ENCODE measurements at regions of chr5 and their contacts with region 1.

Region 1: DNA sequence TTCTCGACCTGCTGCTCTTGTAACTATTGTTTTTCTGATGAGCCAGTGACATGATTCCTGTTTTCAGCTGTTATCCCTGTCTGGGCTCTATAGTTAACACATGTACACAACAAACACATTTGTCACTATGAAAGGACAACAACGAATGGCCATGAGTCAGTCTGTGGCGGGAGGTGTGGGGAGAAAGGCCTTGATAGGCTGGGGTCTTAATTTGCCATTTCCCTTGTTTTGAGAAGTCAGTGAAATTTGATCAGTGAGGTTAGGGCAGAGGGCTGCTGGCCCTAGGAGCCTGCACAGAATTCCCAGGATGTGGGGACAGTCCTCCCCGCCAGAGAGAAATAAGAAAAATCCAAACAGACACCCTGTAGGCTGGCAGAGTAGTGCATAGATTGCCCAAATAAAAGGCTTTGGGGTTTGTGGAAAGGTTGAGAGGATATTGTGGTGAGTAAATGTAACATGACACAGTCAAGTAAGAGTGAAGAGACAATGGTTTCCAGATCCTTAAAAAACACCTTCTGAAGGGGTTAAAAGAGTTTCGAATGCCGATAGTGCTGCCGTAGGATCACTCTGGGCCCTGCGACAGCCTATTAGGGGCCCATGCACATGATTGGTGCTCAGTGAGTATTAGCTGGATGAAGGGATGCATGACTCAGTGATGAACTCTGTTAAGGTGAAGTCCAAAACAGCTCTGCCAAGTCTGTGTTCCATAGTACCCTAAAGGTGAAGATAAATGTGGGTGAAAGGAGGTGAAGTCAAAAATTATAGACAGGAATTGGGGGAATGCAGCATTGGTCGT is 110.9 kb upstream of the PRRC1 start:
- DNase-seq: no peak
- ATAC-seq: peak; percentile 29 to 30
- H3K4me3 ChIP-seq: no peak overlapping the region
- H3K27ac ChIP-seq: peak overlapping the region; percentile 81 to 95 (median 89)
- H3K4me1 ChIP-seq: peaks cover 33 to 35% of the 10 kb centered on the region in 2 donors
- H3K27me3 ChIP-seq: no peaks in the 10 kb centered on the region
- CTCF ChIP-seq: no peak
- POLR2A ChIP-seq: no peak

Region 2: DNA sequence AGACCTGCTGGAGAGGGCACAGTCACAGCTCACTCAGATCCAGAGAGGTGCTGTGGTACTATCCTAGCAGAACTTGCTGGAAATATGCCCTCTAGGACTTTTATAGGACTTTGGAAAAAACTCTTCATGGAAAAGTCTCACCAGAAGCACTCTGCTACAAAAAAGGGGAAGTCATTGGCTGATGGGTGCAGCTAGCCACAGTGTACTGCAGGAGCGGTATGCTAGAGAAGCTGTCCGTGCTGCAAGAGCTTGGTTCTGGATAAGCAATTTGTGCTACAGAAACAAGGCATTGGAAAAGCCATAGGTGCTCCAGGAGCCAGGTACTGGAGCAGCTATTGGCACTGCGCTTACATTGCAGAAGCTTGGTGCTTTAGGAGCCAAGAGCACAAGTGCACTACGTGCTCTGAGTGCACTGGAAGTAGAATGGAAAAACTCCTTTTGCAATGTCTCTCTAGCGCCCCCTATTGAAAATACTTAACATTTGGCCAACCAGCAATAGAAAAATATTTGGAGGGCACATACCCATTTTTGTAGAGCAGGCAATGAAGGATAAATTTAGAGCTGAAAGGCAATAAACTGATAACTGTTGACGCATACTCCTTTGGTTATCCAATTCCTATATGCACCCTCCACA is 32.5 kb before region 1 on chr5:
- in situ Hi-C with region 1: no loop called
- intact Hi-C with region 1: loop called (anchors 2 kb)
- DNase-seq: no peak
- ATAC-seq: no peak
- H3K4me3 ChIP-seq: no peak overlapping the region
- H3K27ac ChIP-seq: no peak overlapping the region
- H3K4me1 ChIP-seq: peaks cover 23 to 26% of the 10 kb centered on the region in 2 donors
- H3K27me3 ChIP-seq: no peaks in the 10 kb centered on the region
- CTCF ChIP-seq: peak in 1 of 5 experiments; percentile 27
- POLR2A ChIP-seq: no peak

Region 3: DNA sequence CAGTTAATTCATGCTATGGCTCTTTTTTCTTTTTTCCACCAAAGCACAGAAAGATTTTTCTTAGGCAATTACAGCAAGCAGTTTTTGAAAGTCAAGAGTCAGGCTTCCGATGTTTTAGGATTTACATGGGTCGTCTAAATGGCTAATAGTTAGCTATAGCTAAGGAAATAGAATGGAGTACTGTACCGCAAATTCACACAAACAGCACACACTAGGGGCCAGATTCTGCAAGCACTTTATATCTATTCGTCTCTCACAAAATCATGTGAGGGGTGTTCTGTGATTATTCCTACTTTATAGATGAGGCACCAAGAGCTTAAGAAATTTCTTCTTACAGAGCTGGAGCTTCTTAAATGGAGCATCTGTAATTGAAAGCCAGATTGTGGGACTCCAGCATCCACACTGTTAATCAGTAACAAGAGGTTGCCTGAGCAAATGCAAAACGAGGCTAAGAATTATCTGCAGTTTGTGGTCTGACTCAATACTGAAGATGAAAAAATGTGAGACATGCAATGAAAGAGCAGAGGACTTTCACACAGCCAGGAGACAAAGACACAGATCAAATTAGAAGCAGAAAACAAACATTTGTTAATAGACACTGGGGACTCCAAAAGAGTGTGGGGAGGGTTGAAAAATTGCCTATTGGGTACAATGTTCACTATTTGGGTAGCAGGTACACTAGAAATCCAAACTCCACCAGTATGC is 179.7 kb after region 1 on chr5:
- in situ Hi-C with region 1: no loop called
- intact Hi-C with region 1: no loop called
- DNase-seq: no peak
- ATAC-seq: no peak
- H3K4me3 ChIP-seq: no peak overlapping the region
- H3K27ac ChIP-seq: no peak overlapping the region
- H3K4me1 ChIP-seq: peaks cover 8% of the 10 kb centered on the region in 2 donors
- H3K27me3 ChIP-seq: no peaks in the 10 kb centered on the region
- CTCF ChIP-seq: no peak
- POLR2A ChIP-seq: no peak

Measured in gastrocnemius medialis (tissue), 4 donors.